ENCODE measurements at regions of chr6 and their contacts with region 1.

Region 1: DNA sequence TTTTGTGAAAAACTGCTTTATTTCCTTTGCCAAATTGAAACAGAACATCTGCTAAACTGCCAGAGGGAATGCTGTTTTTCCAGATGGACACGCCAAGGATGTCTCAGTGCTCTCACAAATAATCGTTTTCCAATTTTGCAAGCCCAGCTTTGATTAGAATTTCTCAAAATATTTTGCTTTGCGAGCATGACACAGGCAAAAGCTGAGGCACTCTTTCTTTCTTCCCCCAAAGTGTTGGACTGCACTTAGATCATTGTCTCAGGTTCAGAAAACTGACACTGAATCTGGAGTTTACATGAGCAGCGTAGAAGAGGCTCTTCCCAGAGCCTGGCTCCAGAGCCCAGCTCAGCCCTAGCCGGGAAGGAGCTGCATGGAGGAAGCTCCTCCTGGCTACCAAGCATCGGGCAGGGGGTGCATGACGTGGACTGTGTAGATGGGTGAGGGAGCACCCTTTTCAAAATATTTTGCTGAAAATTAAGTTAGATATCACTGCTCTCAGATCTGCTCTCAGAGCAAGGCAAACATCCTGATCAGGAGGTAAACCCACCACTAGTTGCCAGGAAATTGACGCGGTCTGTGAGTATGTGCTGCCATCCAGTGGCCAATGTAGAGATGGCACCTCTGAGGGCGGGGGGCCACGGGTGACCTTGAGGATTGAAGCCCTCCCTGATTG is 107.5 kb downstream of the SLC22A3 start:
- DNase-seq: peak; percentile 40 to 82 (median 79)
- ATAC-seq: peak; percentile 85 to 87
- H3K4me3 ChIP-seq: no peak overlapping the region
- H3K27ac ChIP-seq: no peak overlapping the region
- H3K4me1 ChIP-seq: no peaks in the 10 kb centered on the region
- H3K27me3 ChIP-seq: no peaks in the 10 kb centered on the region

Region 2: GRCh38 chr6:159353193-159353592 is 1102.5 kb before region 1 on chr6:
- intact Hi-C with region 1: no loop called
- DNase-seq: no peak
- ATAC-seq: no peak
- H3K4me3 ChIP-seq: no peak overlapping the region
- H3K27ac ChIP-seq: no peak overlapping the region
- H3K4me1 ChIP-seq: no peaks in the 10 kb centered on the region
- H3K27me3 ChIP-seq: peaks cover 3% of the 10 kb centered on the region

Region 3: DNA sequence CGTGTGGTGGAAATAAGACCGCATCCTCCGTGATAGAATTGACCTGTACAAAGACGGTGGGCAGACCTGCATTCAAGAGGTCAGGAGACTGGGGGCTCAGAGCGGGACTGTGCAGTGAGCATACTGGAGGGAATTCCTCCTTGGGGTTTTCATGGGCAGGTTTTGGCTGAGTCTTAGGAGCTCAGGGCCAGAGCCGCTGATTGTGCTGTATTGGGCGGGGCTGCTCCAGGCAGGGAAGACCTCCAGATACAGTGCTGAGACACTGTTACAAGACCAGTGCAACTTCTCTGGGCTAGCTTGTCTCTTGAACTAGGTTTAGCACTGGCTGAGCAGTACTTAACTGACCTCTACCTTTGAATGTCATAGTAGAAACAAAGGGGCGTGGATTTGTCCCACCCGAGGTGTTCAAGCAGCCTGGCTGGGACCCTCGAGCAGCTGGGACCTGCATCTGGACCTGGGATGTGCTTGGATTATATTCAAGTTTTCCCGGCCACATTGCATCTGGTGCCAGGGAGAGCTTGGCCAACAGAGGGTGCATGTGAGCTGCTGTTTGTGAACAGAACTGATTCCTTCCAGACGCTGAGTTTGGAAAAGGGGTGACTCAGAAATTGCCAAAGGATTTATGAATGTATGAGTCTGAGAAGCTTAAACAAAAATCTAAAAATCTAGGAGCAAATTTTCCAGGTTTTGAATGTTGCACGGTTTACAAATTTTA is 367.5 kb before region 1 on chr6:
- intact Hi-C with region 1: loop called in 1 of 4 experiments (anchors 5 kb)
- DNase-seq: peak; percentile 61 to 88 (median 75)
- ATAC-seq: peak; percentile 68 to 76
- H3K4me3 ChIP-seq: no peak overlapping the region
- H3K27ac ChIP-seq: no peak overlapping the region
- H3K4me1 ChIP-seq: no peaks in the 10 kb centered on the region
- H3K27me3 ChIP-seq: no peaks in the 10 kb centered on the region

Region 4: GRCh38 chr6:160137989-160138835 is 317.5 kb before region 1 on chr6:
- intact Hi-C with region 1: loop called (anchors 2 to 5 kb)
- DNase-seq: peak in 1 of 3 donors; percentile 74
- ATAC-seq: peak; percentile 29 to 35
- H3K4me3 ChIP-seq: no peak overlapping the region
- H3K27ac ChIP-seq: no peak overlapping the region
- H3K4me1 ChIP-seq: no peaks in the 10 kb centered on the region
- H3K27me3 ChIP-seq: no peaks in the 10 kb centered on the region

Region 5: GRCh38 chr6:160348142-160349019 is 107.3 kb before region 1 on chr6 and contains the start of gene SLC22A3:
- intact Hi-C with region 1: no loop called
- DNase-seq: peak; percentile 38 to 79 (median 74)
- ATAC-seq: peak; percentile 69 to 80
- H3K4me3 ChIP-seq: peak within 1 kb of the TSS; percentile 55
- H3K27ac ChIP-seq: no peak within 1 kb of the TSS
- H3K4me1 ChIP-seq: no peaks in the 10 kb centered on the region
- H3K27me3 ChIP-seq: no peaks in the 10 kb centered on the region
- total RNA-seq, gene SLC22A3: 0.57 to 1.1 (median 0.92) TPM

Region 6: GRCh38 chr6:160379464-160379863 is 76.2 kb before region 1 on chr6:
- intact Hi-C with region 1: no loop called
- DNase-seq: no peak
- ATAC-seq: no peak
- H3K4me3 ChIP-seq: no peak overlapping the region
- H3K27ac ChIP-seq: no peak overlapping the region
- H3K4me1 ChIP-seq: no peaks in the 10 kb centered on the region
- H3K27me3 ChIP-seq: no peaks in the 10 kb centered on the region

Region 7: DNA sequence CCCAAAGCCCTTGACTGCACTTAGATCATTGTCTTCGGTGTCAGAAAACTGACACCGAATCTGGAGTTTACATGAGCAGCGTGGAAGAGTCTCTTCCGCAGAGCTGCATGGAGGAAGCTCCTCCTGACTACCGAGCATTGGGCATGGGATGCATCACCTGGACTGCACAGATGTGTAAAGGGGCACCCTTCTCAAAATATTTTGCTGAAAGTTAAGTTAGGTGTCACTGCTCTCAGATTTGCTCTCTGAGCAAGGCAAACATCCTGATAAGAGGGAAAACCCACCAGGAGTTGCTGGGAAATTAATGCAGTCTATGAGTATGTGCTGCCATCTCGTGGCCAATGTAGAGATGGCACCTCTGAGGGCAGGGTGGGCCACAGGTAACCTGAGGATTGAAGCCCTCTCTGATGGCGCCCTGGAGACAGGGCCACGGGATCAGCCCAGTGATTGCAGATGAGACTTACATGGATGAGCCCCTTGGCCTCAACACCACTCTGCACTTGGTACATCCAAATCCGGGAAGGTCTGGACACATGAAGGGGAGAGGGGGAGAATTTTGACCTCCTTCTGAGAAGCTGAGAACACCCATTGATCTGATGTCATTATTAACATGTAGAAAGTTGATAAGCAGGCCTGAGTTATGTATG is 78.5 kb after region 1 on chr6:
- intact Hi-C with region 1: loop called in 2 of 4 experiments (anchors 2 kb)
- DNase-seq: peak; percentile 37 to 74 (median 68)
- ATAC-seq: peak; percentile 71 to 72
- H3K4me3 ChIP-seq: no peak overlapping the region
- H3K27ac ChIP-seq: no peak overlapping the region
- H3K4me1 ChIP-seq: no peaks in the 10 kb centered on the region
- H3K27me3 ChIP-seq: no peaks in the 10 kb centered on the region